ENCODE measurements at regions of chr6 and their contacts with region 1.

Region 1: GRCh38 chr6:29792123-29793035 is 35.2 kb upstream of the HLA-G start:
- DNase-seq: peak; percentile 56
- ATAC-seq: peak; percentile 88
- H3K4me3 Mint-ChIP-seq: peak overlapping the region; percentile 87
- H3K27ac Mint-ChIP-seq: no peak overlapping the region
- H3K4me1 Mint-ChIP-seq: peaks cover 12% of the 10 kb centered on the region
- H3K27me3 Mint-ChIP-seq: peaks cover 34% of the 10 kb centered on the region
- CTCF ChIP-seq: no peak

Region 2: GRCh38 chr6:29146154-29146553 is 646.2 kb before region 1 on chr6:
- CTCF ChIA-PET with region 1: no interaction called
- POLR2A ChIA-PET with region 1: no interaction called
- intact Hi-C with region 1: no loop called
- DNase-seq: no peak
- ATAC-seq: no peak
- H3K4me3 Mint-ChIP-seq: no peak overlapping the region
- H3K27ac Mint-ChIP-seq: no peak overlapping the region
- H3K4me1 Mint-ChIP-seq: no peaks in the 10 kb centered on the region
- H3K27me3 Mint-ChIP-seq: peaks cover 11% of the 10 kb centered on the region
- CTCF ChIP-seq: no peak

Region 3: GRCh38 chr6:29319931-29320330 is 472.4 kb before region 1 on chr6:
- CTCF ChIA-PET with region 1: no interaction called
- POLR2A ChIA-PET with region 1: no interaction called
- intact Hi-C with region 1: loop called (anchors 10 kb)
- DNase-seq: no peak
- ATAC-seq: no peak
- H3K4me3 Mint-ChIP-seq: no peak overlapping the region
- H3K27ac Mint-ChIP-seq: no peak overlapping the region
- H3K4me1 Mint-ChIP-seq: no peaks in the 10 kb centered on the region
- H3K27me3 Mint-ChIP-seq: peaks cover 20% of the 10 kb centered on the region
- CTCF ChIP-seq: no peak

Region 4: DNA sequence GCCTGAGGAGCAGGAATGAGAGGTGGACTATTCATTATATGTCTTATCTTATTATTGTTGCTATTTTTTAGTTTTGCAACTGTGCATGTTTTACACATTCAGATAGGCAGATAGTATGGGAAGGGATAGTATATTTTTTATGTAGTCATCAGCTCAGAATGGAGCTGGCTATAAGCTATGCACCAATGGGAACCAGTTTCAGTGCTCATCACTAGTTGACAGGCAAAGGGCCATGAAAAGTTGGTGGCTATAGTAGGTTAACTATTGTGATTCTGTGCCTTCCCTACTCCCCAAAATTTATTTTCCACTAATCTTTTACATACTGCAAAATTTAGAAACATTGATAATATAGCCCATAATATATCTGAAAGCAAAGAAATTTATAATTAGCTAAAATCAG is 227.5 kb before region 1 on chr6:
- CTCF ChIA-PET with region 1: no interaction called
- POLR2A ChIA-PET with region 1: no interaction called
- intact Hi-C with region 1: no loop called
- DNase-seq: no peak
- ATAC-seq: peak; percentile 64
- H3K4me3 Mint-ChIP-seq: no peak overlapping the region
- H3K27ac Mint-ChIP-seq: no peak overlapping the region
- H3K4me1 Mint-ChIP-seq: peaks cover 14% of the 10 kb centered on the region
- H3K27me3 Mint-ChIP-seq: peaks cover 9% of the 10 kb centered on the region
- CTCF ChIP-seq: no peak

Measured in activated B cell treated with CpG ODN at 0.5 μM for 24 hours (primary cell).